Activated CD4-positive, alpha-beta memory T cell treated with anti-CD3 and anti-CD28 coated beads for 36 hours (primary cell): ENCODE measurements at regions of chr17 and their contacts with region 1.

Region 1: DNA sequence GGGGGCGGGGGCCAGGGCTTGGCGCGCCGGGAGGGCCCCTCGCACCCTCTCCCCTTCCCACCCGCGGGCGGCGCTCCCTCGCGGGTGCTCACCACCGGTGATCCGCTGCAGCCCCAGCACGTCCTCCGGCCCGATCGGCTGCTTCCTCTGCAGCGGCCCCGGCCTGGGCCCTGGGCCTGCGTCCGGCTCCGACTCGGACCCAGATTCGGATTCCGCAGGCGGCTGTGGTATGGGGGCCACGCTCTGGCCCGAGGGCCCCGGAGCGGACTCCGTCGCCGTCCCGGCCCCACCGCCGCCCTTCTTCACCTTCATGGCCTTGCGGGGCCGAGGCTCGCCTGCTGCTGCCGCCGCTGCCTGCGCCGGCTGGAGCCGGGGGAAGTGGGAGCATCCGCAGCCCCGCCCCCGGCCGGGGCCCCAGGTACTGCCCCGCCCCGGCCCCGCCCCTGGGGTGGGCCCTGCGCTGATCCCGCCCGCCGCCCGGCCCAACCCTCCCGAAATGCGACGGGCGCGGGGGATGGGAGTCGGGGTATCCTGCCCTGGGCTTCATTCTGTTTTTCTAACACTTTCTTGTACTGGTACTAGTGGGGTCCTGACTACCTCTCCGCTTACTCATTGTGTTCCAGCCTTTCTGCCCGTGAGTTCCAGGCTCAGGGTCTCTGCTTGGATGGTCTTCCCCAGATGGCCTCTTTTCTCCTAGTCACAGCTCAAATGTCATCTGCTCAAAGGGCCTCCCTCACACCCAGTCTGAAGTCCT is at the start of gene UNC119:
- DNase-seq: peak; percentile 88
- H3K4me3 Mint-ChIP-seq: peak within 1 kb of the TSS; percentile 88
- H3K27ac Mint-ChIP-seq: peak within 1 kb of the TSS; percentile 65
- H3K4me1 Mint-ChIP-seq: peaks cover 49% of the 10 kb centered on the region
- H3K27me3 Mint-ChIP-seq: no peaks in the 10 kb centered on the region
- total RNA-seq, gene UNC119: 38.0 to 42.0 TPM

Region 2: GRCh38 chr17:28357061-28357900 is 195.1 kb before region 1 on chr17 and contains the start of gene POLDIP2:
- CTCF ChIA-PET with region 1: no interaction called
- POLR2A ChIA-PET with region 1: no interaction called
- intact Hi-C with region 1: loop called (anchors 10 kb)
- DNase-seq: peak; percentile 98
- H3K4me3 Mint-ChIP-seq: peak within 1 kb of the TSS; percentile 95
- H3K27ac Mint-ChIP-seq: peak within 1 kb of the TSS; percentile 79
- H3K4me1 Mint-ChIP-seq: peaks cover 28% of the 10 kb centered on the region
- H3K27me3 Mint-ChIP-seq: no peaks in the 10 kb centered on the region
- total RNA-seq, gene POLDIP2: 73.8 to 76.4 TPM

Region 3: DNA sequence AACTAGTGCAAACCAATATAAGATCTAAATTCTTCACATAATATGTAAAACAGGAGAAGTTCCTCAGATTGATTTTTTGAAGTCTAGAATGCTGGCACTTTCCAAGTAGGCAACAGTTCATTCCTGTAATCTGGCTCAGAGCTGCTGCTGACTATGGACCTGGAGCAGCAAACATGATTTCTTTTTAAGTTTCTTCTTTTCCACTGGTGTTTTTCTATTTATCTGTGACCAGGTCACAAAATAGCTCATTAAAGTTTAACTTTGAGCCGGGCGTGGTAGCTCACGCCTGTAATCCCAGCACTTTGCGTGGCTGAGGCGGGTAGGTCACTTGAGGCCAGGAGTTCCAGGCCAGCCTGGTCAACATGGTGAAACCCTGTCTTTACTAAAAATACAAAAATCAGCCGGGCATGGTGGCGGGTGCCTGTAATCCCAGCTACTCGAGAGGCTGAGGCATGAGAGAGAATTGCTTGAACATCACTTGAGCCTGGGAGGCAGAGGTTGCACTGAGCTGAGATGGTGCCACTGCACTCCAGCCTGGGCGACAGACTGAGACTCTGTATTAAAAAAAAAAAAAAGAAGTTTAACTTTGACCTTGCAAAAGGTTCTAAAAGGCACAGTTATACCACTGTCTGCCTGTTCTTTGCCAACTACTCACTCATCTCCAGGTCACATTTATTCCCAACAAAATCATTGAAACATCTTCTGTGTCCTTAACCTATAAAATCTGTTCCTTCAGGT is 108.4 kb before region 1 on chr17:
- CTCF ChIA-PET with region 1: no interaction called
- POLR2A ChIA-PET with region 1: no interaction called
- intact Hi-C with region 1: no loop called
- DNase-seq: no peak
- H3K4me3 Mint-ChIP-seq: no peak overlapping the region
- H3K27ac Mint-ChIP-seq: no peak overlapping the region
- H3K4me1 Mint-ChIP-seq: no peaks in the 10 kb centered on the region
- H3K27me3 Mint-ChIP-seq: peaks cover 8% of the 10 kb centered on the region

Region 4: DNA sequence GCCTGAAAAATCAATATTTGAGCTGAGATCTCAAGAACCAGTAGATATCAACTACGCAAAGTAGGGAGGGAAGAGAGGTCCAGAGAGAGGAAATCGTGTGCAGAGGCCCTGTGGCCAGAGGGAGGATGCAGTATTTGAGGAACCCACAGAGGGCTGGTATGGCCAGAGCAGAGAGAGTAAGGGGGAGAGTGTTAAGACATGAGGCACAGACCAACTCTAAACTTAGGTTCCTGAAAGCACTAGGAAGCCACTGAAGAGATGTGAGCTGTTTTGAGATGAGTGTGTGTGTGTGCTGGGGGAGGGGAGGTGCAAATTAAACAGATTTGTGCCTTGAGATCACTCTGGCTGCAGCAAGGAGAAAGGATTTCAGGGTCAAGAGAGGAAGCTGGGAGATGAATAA is 68.1 kb before region 1 on chr17:
- CTCF ChIA-PET with region 1: no interaction called
- POLR2A ChIA-PET with region 1: no interaction called
- intact Hi-C with region 1: no loop called
- DNase-seq: peak; percentile 20
- H3K4me3 Mint-ChIP-seq: no peak overlapping the region
- H3K27ac Mint-ChIP-seq: no peak overlapping the region
- H3K4me1 Mint-ChIP-seq: peaks cover 8% of the 10 kb centered on the region
- H3K27me3 Mint-ChIP-seq: no peaks in the 10 kb centered on the region

Region 5: DNA sequence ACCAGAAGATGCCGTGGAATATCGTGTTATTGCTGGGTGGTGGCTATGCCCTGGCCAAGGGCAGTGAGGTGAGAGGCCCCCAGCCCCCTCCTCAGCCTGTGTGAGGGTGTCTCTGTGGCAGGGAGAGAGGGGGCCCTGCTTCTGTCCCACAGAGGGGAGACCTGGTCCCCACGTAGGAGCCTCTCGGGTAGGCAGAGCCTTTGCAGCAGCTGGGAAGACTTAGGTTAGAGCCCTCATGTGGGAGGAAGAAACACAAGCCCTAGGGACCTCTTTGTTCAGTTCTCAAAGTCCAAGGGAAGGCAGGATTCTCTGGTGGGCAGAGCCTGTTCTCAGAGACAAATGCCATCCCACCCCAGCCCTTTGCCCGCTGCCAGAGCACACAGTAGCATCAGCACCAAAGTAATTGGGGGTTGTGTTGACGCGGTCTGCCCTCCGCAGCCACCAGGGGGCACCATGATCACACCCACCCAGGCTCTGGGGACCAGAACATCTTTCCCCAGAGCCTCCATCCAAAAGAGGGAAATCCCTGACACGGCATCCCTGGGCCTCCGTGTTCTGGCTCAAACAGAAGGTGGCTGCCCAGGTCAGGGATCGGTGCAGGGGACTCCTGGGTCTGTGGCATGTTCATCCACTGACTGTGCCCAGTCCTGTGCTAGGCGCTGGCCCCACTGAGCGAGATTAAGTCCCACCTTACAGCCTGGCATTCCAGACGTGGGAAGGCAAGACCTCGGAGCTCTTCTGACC is 57.8 kb before region 1 on chr17:
- CTCF ChIA-PET with region 1: interaction called, 28 read pairs
- POLR2A ChIA-PET with region 1: no interaction called
- intact Hi-C with region 1: loop called (anchors 2 kb)
- DNase-seq: peak; percentile 87
- H3K4me3 Mint-ChIP-seq: no peak overlapping the region
- H3K27ac Mint-ChIP-seq: no peak overlapping the region
- H3K4me1 Mint-ChIP-seq: no peaks in the 10 kb centered on the region
- H3K27me3 Mint-ChIP-seq: peaks cover 3% of the 10 kb centered on the region

Region 6: DNA sequence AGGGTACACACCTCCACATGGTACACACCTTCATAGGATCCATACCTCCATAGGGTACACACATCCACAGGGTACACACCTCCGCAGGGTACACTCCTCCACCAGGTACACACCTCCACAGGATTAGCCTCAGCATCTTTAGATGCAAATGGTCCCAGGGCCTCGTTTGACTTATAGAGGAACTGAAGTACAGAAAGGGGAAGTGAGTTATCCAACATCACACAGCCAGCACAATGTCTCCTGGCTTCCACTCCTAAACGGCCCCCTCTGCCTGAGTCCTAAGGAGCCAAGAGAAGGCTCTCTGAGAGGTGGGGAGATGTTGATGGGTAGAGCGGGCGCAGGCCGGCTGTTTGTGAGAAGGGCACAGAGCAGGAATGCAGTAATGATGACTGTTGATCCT is 34.3 kb before region 1 on chr17:
- CTCF ChIA-PET with region 1: no interaction called
- POLR2A ChIA-PET with region 1: no interaction called
- intact Hi-C with region 1: no loop called
- DNase-seq: no peak
- H3K4me3 Mint-ChIP-seq: no peak overlapping the region
- H3K27ac Mint-ChIP-seq: no peak overlapping the region
- H3K4me1 Mint-ChIP-seq: no peaks in the 10 kb centered on the region
- H3K27me3 Mint-ChIP-seq: peaks cover 1% of the 10 kb centered on the region

Region 7: GRCh38 chr17:28563475-28563874 is 11.1 kb after region 1 on chr17:
- CTCF ChIA-PET with region 1: interaction called, 53 read pairs
- POLR2A ChIA-PET with region 1: interaction called, 3 read pairs
- intact Hi-C with region 1: no loop called
- DNase-seq: no peak
- H3K4me3 Mint-ChIP-seq: no peak overlapping the region
- H3K27ac Mint-ChIP-seq: no peak overlapping the region
- H3K4me1 Mint-ChIP-seq: peaks cover 19% of the 10 kb centered on the region
- H3K27me3 Mint-ChIP-seq: no peaks in the 10 kb centered on the region

Region 8: DNA sequence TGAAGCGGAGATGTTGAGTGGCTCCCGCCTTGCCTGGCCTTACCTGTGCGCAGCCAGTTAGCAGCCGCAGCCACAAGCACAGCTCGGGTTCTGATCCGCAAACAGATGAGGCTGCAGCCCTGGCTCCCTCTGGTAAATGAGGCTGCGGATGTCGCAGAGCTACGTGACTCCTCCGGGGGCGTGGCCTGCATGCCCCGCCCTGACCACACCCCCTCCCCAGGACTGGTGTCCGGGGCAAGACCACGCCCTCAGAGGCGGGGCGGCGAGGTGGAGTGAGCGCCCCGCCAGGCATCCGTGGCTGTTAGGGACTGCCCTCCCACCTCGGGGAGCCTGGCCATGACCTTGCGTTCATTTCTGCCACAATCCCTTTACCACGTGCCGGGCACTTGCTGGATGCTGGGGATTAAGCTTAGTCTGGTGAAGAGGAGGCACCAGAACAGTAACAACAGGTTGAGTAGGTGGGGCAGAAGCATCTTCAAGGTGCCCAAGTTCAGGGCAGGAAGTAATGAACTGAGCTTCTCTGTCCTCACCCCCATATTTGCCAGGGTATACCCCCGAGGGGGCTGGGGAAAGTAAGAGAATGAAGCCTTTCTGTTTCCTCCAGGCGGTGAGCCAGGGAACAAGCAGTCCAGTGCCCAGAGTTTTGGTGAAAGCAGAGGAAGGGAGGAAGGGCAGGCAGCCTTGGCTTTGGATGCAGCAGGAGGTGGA is 24.5 kb after region 1 on chr17 and contains the start of gene ALDOC:
- CTCF ChIA-PET with region 1: interaction called, 53 read pairs
- POLR2A ChIA-PET with region 1: interaction called, 11 read pairs
- intact Hi-C with region 1: loop called (anchors 1 kb)
- DNase-seq: peak; percentile 98
- H3K4me3 Mint-ChIP-seq: peak within 1 kb of the TSS; percentile 78
- H3K27ac Mint-ChIP-seq: peak within 1 kb of the TSS; percentile 81
- H3K4me1 Mint-ChIP-seq: peaks cover 47% of the 10 kb centered on the region
- H3K27me3 Mint-ChIP-seq: no peaks in the 10 kb centered on the region
- total RNA-seq, gene ALDOC: 75.2 to 77.3 TPM

Region 9: GRCh38 chr17:28612936-28613872 is 60.8 kb after region 1 on chr17:
- CTCF ChIA-PET with region 1: interaction called, 9 read pairs
- POLR2A ChIA-PET with region 1: no interaction called
- intact Hi-C with region 1: loop called (anchors 5 kb)
- DNase-seq: peak; percentile 32
- H3K4me3 Mint-ChIP-seq: no peak overlapping the region
- H3K27ac Mint-ChIP-seq: no peak overlapping the region
- H3K4me1 Mint-ChIP-seq: peaks cover 5% of the 10 kb centered on the region
- H3K27me3 Mint-ChIP-seq: no peaks in the 10 kb centered on the region